ENCODE measurements at regions of chr11 and their contacts with region 1.

Region 1: GRCh38 chr11:92941676-92942571 is 27.5 kb upstream of the MTNR1B start:
- DNase-seq: peak; percentile 8 to 27
- H3K4me3 ChIP-seq: no peak overlapping the region
- H3K27ac ChIP-seq: no peak overlapping the region
- H3K4me1 ChIP-seq: no peaks in the 10 kb centered on the region
- H3K27me3 ChIP-seq: no peaks in the 10 kb centered on the region
- CTCF ChIP-seq: peak; percentile 28 to 80 (median 60)
- POLR2A ChIP-seq: no peak

Region 2: GRCh38 chr11:93225662-93226061 is 283.7 kb after region 1 on chr11:
- intact Hi-C with region 1: loop called (anchors 5 kb)
- DNase-seq: no peak
- H3K4me3 ChIP-seq: no peak overlapping the region
- H3K27ac ChIP-seq: no peak overlapping the region
- H3K4me1 ChIP-seq: no peaks in the 10 kb centered on the region
- H3K27me3 ChIP-seq: no peaks in the 10 kb centered on the region
- CTCF ChIP-seq: peak in 4 of 6 experiments; percentile 44 to 68 (median 56)
- POLR2A ChIP-seq: no peak

Measured in thyroid gland (tissue), 4 donors.